ENCODE measurements at regions of chr11 and their contacts with region 1.

Region 1: DNA sequence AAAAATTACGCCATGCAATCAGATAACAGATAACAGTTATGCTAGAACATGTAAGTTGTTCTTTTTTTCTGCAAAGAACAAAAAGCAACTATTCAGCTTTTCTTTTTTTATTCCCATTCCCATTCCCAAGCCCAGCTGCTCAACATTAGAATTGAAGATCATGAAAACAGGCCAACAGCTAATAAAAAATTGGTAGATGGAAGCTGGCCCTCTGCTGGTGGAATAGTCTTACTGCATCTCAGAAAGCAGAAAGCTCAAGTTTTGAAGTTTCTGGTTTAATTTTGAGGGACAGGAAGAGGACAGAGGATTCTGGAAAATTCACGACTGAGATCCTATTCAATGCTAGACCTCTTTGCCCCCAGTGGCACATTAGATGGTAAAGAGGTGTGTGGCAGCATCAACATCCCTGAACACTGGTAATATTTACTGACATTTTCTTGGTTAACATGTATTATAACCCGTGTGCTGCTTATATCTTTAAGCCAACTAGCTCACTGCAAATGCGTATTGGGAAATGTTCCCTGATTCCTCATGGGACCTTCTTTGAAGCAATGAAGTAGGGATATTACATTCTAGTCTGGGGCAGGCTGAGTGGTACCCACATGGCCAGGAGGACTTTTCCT is 591.2 kb downstream of the OPCML start:
- DNase-seq: no peak
- H3K4me3 ChIP-seq: no peak overlapping the region
- H3K27ac ChIP-seq: no peak overlapping the region
- H3K4me1 ChIP-seq: peaks cover 3 to 7% (median 4%) of the 10 kb centered on the region in 4 experiments; a peak in 6 of 7 replicates
- H3K27me3 ChIP-seq: peaks cover 0 to 33% (median 26%) of the 10 kb centered on the region in 4 experiments; a peak in 6 of 7 replicates
- CTCF ChIP-seq: peak in 2 of 3 experiments; percentile 70 to 71; a peak in 3 of 4 replicates
- EP300 ChIP-seq: no peak
- POLR2A ChIP-seq: no peak
- RAD21 ChIP-seq: peak; percentile 76 to 84

Region 2: GRCh38 chr11:132864811-132865576 is 76.1 kb before region 1 on chr11:
- CTCF ChIA-PET with region 1: interaction called, 19 read pairs
- POLR2A ChIA-PET with region 1: no interaction called
- DNase-seq: peak; percentile 56 to 60
- H3K4me3 ChIP-seq: no peak overlapping the region
- H3K27ac ChIP-seq: no peak overlapping the region
- H3K4me1 ChIP-seq: no peaks in the 10 kb centered on the region
- H3K27me3 ChIP-seq: no peaks in the 10 kb centered on the region
- CTCF ChIP-seq: peak; percentile 45 to 68 (median 68); a peak in 3 of 4 replicates
- EP300 ChIP-seq: no peak
- POLR2A ChIP-seq: no peak
- RAD21 ChIP-seq: peak; percentile 40 to 61

Region 3: GRCh38 chr11:132910011-132910760 is 30.9 kb before region 1 on chr11:
- CTCF ChIA-PET with region 1: interaction called, 18 read pairs
- POLR2A ChIA-PET with region 1: no interaction called
- DNase-seq: no peak
- H3K4me3 ChIP-seq: no peak overlapping the region
- H3K27ac ChIP-seq: no peak overlapping the region
- H3K4me1 ChIP-seq: peaks cover 0 to 4% (median under 1%) of the 10 kb centered on the region in 4 experiments; a peak in 1 of 7 replicates
- H3K27me3 ChIP-seq: no peaks in the 10 kb centered on the region; a peak in 1 of 7 replicates
- CTCF ChIP-seq: no peak
- EP300 ChIP-seq: no peak
- POLR2A ChIP-seq: no peak
- RAD21 ChIP-seq: no peak

Region 4: GRCh38 chr11:132987936-132988335 is 46.8 kb after region 1 on chr11:
- CTCF ChIA-PET with region 1: interaction called, 14 read pairs
- POLR2A ChIA-PET with region 1: no interaction called
- DNase-seq: no peak
- H3K4me3 ChIP-seq: no peak overlapping the region
- H3K27ac ChIP-seq: no peak overlapping the region
- H3K4me1 ChIP-seq: peaks cover 0 to 7% (median 3%) of the 10 kb centered on the region in 4 experiments; a peak in 4 of 7 replicates
- H3K27me3 ChIP-seq: peaks cover 0 to 4% (median 2%) of the 10 kb centered on the region in 4 experiments; a peak in 4 of 7 replicates
- CTCF ChIP-seq: no peak
- EP300 ChIP-seq: no peak
- POLR2A ChIP-seq: no peak
- RAD21 ChIP-seq: no peak

Region 5: DNA sequence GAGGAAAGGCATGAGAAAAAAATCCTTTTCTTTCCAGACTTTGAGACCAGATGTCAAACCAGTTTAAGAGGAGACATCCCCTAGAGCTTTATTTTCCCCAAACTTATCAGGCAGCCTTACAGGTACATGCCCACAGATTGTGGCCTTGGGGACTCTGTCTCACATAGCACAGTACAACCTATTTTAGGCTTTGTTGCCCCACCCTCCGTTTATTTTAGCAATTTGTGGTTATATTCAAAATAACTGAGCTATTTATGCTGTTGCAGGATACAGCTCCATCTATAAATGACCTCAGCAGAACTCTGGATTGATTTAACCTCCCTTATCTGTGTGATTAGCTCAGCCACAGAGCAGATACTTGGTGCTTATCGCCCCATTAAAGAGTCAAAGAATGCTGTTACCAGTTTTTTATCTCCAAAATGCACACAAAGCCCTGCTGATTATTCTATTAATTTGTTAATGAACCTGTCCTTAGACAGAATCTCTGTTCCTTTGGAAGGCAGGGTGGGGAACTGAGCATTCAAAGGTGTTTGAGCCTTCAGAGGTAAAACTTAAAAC is 66.0 kb after region 1 on chr11:
- CTCF ChIA-PET with region 1: interaction called, 10 read pairs
- POLR2A ChIA-PET with region 1: no interaction called
- DNase-seq: no peak
- H3K4me3 ChIP-seq: no peak overlapping the region
- H3K27ac ChIP-seq: no peak overlapping the region
- H3K4me1 ChIP-seq: no peaks in the 10 kb centered on the region
- H3K27me3 ChIP-seq: no peaks in the 10 kb centered on the region
- CTCF ChIP-seq: no peak
- EP300 ChIP-seq: no peak
- POLR2A ChIP-seq: no peak
- RAD21 ChIP-seq: no peak

Region 6: GRCh38 chr11:133070791-133071190 is 129.7 kb after region 1 on chr11:
- CTCF ChIA-PET with region 1: interaction called, 12 read pairs
- POLR2A ChIA-PET with region 1: no interaction called
- DNase-seq: no peak
- H3K4me3 ChIP-seq: no peak overlapping the region
- H3K27ac ChIP-seq: no peak overlapping the region
- H3K4me1 ChIP-seq: peaks cover 0 to 19% (median 12%) of the 10 kb centered on the region in 4 experiments; a peak in 6 of 7 replicates
- H3K27me3 ChIP-seq: no peaks in the 10 kb centered on the region
- CTCF ChIP-seq: peak in 2 of 3 experiments; percentile 13 to 33; a peak in 2 of 4 replicates
- EP300 ChIP-seq: no peak
- POLR2A ChIP-seq: no peak
- RAD21 ChIP-seq: peak in 1 of 2 experiments; percentile 13; a peak in 1 of 4 replicates

Measured in H1 (cell line).